ENCODE measurements at regions of chr1 and their contacts with region 1.

Region 1: DNA sequence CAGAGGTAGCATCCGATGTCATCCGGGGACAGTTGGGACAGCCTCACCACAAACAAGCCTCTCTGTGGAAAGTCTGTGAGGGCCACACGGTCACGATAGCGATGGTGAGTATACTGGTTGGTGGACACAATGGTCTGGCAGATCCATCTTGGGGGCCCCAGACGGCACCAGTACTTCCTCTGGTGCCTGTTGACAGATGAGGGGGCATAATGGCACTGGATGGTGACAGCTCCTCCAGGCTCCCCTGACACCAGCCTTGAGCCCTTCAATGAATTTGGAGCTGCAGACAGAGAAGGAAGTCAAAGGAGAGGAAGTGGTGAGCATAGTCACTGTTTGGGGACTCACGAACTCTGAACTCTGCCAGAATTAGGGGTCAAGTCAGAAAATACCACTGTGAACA is 8.0 kb downstream of the FCAMR start:
- DNase-seq: no peak
- H3K4me3 Mint-ChIP-seq: no peak overlapping the region
- H3K27ac Mint-ChIP-seq: peak overlapping the region; percentile 1
- H3K4me1 Mint-ChIP-seq: peaks cover 27% of the 10 kb centered on the region
- H3K27me3 Mint-ChIP-seq: no peaks in the 10 kb centered on the region
- CTCF ChIP-seq: no peak

Region 2: DNA sequence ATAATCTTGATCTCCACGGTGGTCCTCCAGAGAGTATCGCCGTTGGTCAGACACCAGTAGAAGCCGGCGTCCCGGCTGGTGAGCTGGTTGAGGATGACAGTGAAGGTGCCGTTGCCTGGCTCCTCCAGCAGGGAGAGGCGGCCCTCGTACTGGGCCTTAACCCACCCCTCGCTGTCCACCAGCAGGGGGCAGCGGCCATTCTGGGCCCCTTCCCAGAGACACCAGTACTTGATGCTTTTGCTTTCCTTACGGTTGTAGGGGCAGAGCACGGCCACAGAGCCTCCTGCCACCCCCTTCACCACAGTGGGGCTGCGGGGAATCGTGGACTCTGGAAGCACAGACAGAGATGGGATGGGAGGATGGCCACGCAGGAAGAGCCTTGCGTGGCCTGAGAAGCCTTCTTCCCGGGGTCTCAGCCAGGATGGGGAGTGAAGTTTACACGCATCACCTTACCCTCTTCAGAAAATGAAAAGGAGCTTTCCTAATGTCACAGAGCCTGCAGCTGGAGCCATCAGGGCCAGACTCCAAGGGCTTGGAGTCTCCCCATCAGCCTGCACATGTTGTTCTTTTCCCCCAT is 26.7 kb before region 1 on chr1:
- CTCF ChIA-PET with region 1: interaction called, 12 read pairs
- POLR2A ChIA-PET with region 1: interaction called, 3 read pairs
- intact Hi-C with region 1: no loop called
- DNase-seq: peak; percentile 62
- H3K4me3 Mint-ChIP-seq: no peak overlapping the region
- H3K27ac Mint-ChIP-seq: no peak overlapping the region
- H3K4me1 Mint-ChIP-seq: peaks cover 8% of the 10 kb centered on the region
- H3K27me3 Mint-ChIP-seq: no peaks in the 10 kb centered on the region
- CTCF ChIP-seq: peak; percentile 59

Region 3: GRCh38 chr1:206998816-206999215 is 36.5 kb after region 1 on chr1:
- CTCF ChIA-PET with region 1: no interaction called
- POLR2A ChIA-PET with region 1: no interaction called
- intact Hi-C with region 1: no loop called
- DNase-seq: peak; percentile 78
- H3K4me3 Mint-ChIP-seq: no peak overlapping the region
- H3K27ac Mint-ChIP-seq: no peak overlapping the region
- H3K4me1 Mint-ChIP-seq: peaks cover 26% of the 10 kb centered on the region
- H3K27me3 Mint-ChIP-seq: no peaks in the 10 kb centered on the region
- CTCF ChIP-seq: no peak

Measured in MCF 10A (cell line).